CD4-positive, alpha-beta T cell (primary cell): ENCODE measurements at regions of chr1 and their contacts with region 1.

Region 1: GRCh38 chr1:45569962-45570581 is 13.8 kb upstream of the NASP start:
- DNase-seq: peak; percentile 55 to 87 (median 60)
- ATAC-seq: peak; percentile 99
- H3K4me3 ChIP-seq: no peak overlapping the region
- H3K4me3 Mint-ChIP-seq: no peak overlapping the region
- H3K27ac ChIP-seq: no peak overlapping the region
- H3K27ac Mint-ChIP-seq: no peak overlapping the region
- H3K4me1 ChIP-seq: peaks cover 2% of the 10 kb centered on the region
- H3K4me1 Mint-ChIP-seq: peaks cover 5% of the 10 kb centered on the region
- H3K27me3 ChIP-seq: no peaks in the 10 kb centered on the region
- H3K27me3 Mint-ChIP-seq: no peaks in the 10 kb centered on the region
- CTCF ChIP-seq: peak; percentile 95

Region 2: GRCh38 chr1:44170281-44170823 is 1399.7 kb before region 1 on chr1:
- CTCF ChIA-PET with region 1: no interaction called
- POLR2A ChIA-PET with region 1: no interaction called
- intact Hi-C with region 1: no loop called
- DNase-seq: no peak
- ATAC-seq: no peak
- H3K4me3 ChIP-seq: no peak overlapping the region
- H3K4me3 Mint-ChIP-seq: no peak overlapping the region
- H3K27ac ChIP-seq: no peak overlapping the region
- H3K27ac Mint-ChIP-seq: no peak overlapping the region
- H3K4me1 ChIP-seq: no peaks in the 10 kb centered on the region
- H3K4me1 Mint-ChIP-seq: no peaks in the 10 kb centered on the region
- H3K27me3 ChIP-seq: peaks cover 3% of the 10 kb centered on the region in 2 experiments
- H3K27me3 Mint-ChIP-seq: peaks cover 23% of the 10 kb centered on the region
- CTCF ChIP-seq: no peak

Region 3: GRCh38 chr1:45359882-45360513 is 210.1 kb before region 1 on chr1:
- CTCF ChIA-PET with region 1: interaction called, 7 read pairs
- POLR2A ChIA-PET with region 1: no interaction called
- intact Hi-C with region 1: loop called (anchors 1 kb)
- DNase-seq: peak; percentile 23 to 74 (median 38)
- ATAC-seq: peak; percentile 55
- H3K4me3 ChIP-seq: no peak overlapping the region
- H3K4me3 Mint-ChIP-seq: no peak overlapping the region
- H3K27ac ChIP-seq: no peak overlapping the region
- H3K27ac Mint-ChIP-seq: no peak overlapping the region
- H3K4me1 ChIP-seq: peaks cover 2% of the 10 kb centered on the region
- H3K4me1 Mint-ChIP-seq: peaks cover 4% of the 10 kb centered on the region
- H3K27me3 ChIP-seq: no peaks in the 10 kb centered on the region
- H3K27me3 Mint-ChIP-seq: no peaks in the 10 kb centered on the region
- CTCF ChIP-seq: peak; percentile 67

Region 4: DNA sequence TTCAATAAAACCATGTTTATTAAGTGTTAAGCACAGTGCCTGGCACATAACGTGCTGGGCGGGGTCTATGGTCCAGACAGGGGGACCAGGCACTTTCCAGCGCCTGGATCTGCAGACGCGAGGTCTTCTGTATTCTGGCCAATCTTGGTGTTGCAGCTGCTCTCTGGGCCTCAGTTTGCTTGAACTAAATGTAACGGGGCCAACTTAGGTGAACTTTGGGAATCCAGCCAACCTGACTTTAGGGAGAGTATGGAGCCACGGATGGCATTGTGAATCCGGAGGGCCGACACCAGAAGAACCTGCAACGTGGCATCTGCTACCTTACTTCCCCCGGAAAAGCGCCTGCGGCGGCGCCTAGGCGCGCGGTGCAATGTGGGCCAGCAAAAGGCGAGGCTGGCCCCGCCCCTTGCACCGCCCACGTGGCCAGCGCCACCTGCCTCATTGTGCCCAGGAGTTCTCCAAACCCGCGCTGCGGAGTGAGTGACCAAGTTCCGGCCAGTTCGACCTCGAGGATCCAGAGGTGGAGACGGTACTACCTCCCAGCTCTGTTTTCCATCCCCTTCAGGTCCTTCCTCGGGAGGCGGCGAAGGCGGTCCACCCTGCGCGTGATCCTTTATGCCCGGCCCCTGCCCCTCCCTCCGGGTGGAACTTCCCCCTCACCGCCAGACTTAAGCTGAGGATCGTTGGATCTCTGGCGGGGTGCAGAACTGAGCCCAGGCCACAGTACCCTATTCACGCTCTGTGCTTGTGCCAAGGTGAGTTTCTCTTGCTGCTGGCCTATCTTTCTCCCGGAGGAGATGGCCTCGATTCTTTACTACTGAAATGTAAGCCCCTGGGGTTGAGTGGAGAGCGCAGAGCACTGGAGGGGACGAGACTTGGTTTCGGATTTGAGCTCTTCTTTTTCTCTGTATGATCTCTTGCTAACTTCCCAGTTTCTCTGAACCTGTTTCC is 19.4 kb before region 1 on chr1 and contains the start of gene AKR1A1:
- CTCF ChIA-PET with region 1: interaction called, 9 read pairs
- POLR2A ChIA-PET with region 1: interaction called, 5 read pairs
- intact Hi-C with region 1: loop called in 1 of 2 experiments (anchors 2 kb)
- DNase-seq: peak; percentile 70 to 94 (median 84)
- ATAC-seq: peak; percentile 95
- H3K4me3 ChIP-seq: peak within 1 kb of the TSS; percentile 73
- H3K4me3 Mint-ChIP-seq: peak within 1 kb of the TSS; percentile 98
- H3K27ac ChIP-seq: peak within 1 kb of the TSS; percentile 85 to 90
- H3K27ac Mint-ChIP-seq: peak within 1 kb of the TSS; percentile 89
- H3K4me1 ChIP-seq: peaks cover 27% of the 10 kb centered on the region
- H3K4me1 Mint-ChIP-seq: peaks cover 26% of the 10 kb centered on the region
- H3K27me3 ChIP-seq: no peaks in the 10 kb centered on the region
- H3K27me3 Mint-ChIP-seq: no peaks in the 10 kb centered on the region
- CTCF ChIP-seq: no peak
- total RNA-seq, gene AKR1A1: 25.3 to 31.0 TPM